ENCODE measurements at regions of chr3 and their contacts with region 1.

Region 1: DNA sequence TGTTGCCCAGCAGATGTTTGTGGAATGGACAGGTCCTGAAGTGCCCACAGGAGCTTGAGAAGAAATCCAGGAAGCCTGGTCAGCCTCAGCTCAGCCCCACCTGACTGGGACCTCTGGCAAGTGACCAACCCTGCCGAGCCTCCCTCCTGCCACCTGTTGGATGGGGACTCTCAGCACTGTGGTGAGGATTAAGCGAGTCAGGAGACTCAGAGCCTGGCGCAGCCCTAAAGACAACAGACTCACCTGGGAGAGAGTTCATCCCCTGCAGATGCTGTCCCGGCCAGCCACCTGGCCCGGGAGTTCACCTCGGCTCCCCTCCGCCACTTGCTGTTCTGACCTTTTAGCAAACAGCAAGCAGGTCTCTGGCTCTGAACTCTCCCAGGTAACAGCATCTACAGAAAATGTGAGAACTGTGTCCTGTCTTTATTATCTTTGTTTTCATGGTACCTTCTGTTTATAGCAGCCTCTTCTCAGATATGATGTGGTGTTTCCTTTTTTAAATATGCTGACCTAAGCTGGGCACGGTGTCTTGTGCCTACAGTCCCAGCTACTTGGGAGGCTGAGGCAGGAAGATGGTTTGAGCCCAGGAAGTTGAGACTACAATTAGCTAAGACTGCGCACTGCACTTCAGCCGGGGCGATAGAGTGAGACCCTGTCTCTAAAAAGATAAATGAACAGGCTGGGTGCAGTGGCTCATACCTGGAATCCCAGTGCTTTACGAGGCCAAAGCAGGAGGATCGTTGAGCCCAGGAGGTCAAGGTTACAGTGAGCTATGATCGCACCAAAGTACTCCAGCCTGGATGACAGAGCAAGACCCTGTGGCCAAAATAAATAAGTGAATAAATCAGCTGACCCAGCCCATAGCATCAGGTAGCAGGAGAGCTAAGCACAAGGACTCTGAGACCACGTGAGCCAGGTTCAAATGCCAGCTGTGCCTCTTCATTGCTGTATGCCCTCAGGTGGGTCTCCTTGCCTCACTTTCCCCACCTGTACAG is 32.4 kb upstream of the SLC6A6 start:
- DNase-seq: no peak
- ATAC-seq: no peak

Region 2: GRCh38 chr3:14319654-14320182 is 50.3 kb before region 1 on chr3:
- intact Hi-C with region 1: loop called (anchors 5 kb)
- DNase-seq: no peak
- ATAC-seq: peak; percentile 70